AG04450 (cell line): ENCODE measurements at regions of chr3 and their contacts with region 1.

Region 1: DNA sequence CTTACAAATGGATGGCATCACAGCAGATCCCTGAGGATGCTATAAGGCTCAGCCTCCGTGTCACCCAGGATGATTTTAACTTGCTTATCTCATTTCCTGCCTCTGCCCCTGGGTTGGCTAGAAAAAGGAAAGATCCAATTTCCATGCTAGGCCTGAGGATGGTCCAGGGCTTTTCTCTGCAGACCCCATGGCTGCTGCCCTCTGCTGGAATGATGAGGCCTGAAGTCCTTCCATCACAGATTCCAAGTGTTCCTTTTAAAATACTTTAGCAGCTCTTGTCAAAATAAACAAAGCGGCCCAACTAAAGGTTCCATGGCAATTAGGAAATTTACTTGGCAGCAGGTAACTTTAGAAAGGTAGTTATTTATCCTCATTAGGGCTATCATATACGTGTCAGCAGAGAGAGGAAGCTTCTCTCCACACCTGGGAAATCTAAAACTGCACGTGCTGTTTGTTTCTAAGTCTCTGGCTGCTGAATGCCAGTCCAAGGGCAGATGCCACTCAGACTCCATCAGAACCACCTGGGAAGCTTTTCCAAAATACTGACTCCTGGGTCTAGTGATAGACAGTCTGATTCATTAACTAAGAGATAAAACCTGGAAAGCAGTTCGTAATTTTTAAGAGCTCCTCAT is 401.9 kb upstream of the IL12A start:
- DNase-seq: peak; percentile 11
- H3K4me3 ChIP-seq: no peak overlapping the region
- H3K27ac ChIP-seq: no peak overlapping the region
- H3K27me3 ChIP-seq: peaks cover 3% of the 10 kb centered on the region
- CTCF ChIP-seq: peak; percentile 77

Region 2: DNA sequence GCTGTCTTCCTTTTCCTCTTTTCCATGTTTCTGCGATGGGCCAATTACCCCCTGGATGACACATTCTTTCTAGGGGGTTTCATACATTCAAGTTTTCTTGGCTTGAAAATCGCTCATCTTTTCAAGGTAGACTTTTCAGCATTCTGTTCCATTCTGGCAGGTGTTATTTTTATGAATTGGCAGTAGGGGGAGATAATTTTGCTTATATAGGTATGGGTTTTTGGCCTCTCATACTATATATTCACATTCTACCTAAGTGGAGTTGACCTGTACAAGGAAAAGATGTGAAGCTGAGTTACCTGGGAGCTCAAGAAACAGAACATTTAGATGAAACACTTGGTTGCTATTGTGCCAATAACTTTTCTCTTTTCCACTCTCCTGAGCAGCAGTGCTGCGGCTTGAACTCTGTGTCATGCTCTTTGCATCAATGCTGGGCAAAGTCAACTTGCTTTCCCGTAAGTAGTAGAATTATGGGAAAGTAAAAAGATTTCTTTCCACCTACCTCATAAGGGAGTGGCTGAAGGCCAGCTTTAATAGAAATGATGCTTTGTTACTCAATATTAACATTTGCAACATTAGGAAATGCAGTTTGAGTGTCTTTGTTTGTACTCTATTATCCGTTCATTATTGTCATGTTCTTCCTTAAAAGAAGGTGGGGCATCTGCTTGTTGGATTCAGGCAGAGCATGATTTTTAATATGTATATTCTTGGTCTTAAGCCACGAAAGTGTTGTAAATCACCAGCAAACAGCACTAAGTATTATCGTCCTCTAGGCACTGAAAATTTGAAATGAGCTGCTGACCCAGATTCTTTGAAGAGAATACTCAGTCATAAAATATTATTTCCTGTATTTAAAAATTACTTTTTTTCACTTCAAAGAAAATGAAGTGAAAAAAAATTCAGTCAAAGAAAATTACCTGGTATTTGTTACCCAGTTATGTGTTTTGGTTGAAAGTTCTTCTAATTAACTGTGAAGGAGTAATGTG is 812.5 kb before region 1 on chr3:
- CTCF ChIA-PET with region 1: no interaction called
- POLR2A ChIA-PET with region 1: no interaction called
- DNase-seq: peak; percentile 29
- H3K4me3 ChIP-seq: no peak overlapping the region
- H3K27ac ChIP-seq: no peak overlapping the region
- H3K27me3 ChIP-seq: no peaks in the 10 kb centered on the region
- CTCF ChIP-seq: no peak

Region 3: GRCh38 chr3:159322322-159322939 is 264.3 kb before region 1 on chr3:
- CTCF ChIA-PET with region 1: interaction called, 21 read pairs
- POLR2A ChIA-PET with region 1: no interaction called
- DNase-seq: no peak
- H3K4me3 ChIP-seq: no peak overlapping the region
- H3K27ac ChIP-seq: no peak overlapping the region
- H3K27me3 ChIP-seq: peaks cover 2% of the 10 kb centered on the region
- CTCF ChIP-seq: peak; percentile 82

Region 4: GRCh38 chr3:159645874-159646273 is 59.2 kb after region 1 on chr3:
- CTCF ChIA-PET with region 1: no interaction called
- POLR2A ChIA-PET with region 1: no interaction called
- DNase-seq: no peak
- H3K4me3 ChIP-seq: no peak overlapping the region
- H3K27ac ChIP-seq: no peak overlapping the region
- H3K27me3 ChIP-seq: no peaks in the 10 kb centered on the region
- CTCF ChIP-seq: no peak